ENCODE measurements at regions of chrX and their contacts with region 1.

Region 1: GRCh38 chrX:107627838-107628661 is at the start of gene PRPS1:
- DNase-seq: peak; percentile 62 to 91 (median 86)
- ATAC-seq: peak; percentile 98
- H3K4me3 ChIP-seq: peak within 1 kb of the TSS; percentile 97
- H3K4me3 Mint-ChIP-seq: peak within 1 kb of the TSS; percentile 79 to 97 (median 94)
- H3K27ac ChIP-seq: peak within 1 kb of the TSS; percentile 86
- H3K27ac Mint-ChIP-seq: peak within 1 kb of the TSS; percentile 87 to 97 (median 92)
- H3K4me1 ChIP-seq: peaks cover 11 to 12% of the 10 kb centered on the region in 2 donors
- H3K4me1 Mint-ChIP-seq: peaks cover 2 to 40% (median 32%) of the 10 kb centered on the region in 7 donors
- H3K27me3 ChIP-seq: no peaks in the 10 kb centered on the region
- H3K27me3 Mint-ChIP-seq: no peaks in the 10 kb centered on the region
- total RNA-seq, gene PRPS1: 59.2 to 71.8 (median 62.6) TPM

Region 2: DNA sequence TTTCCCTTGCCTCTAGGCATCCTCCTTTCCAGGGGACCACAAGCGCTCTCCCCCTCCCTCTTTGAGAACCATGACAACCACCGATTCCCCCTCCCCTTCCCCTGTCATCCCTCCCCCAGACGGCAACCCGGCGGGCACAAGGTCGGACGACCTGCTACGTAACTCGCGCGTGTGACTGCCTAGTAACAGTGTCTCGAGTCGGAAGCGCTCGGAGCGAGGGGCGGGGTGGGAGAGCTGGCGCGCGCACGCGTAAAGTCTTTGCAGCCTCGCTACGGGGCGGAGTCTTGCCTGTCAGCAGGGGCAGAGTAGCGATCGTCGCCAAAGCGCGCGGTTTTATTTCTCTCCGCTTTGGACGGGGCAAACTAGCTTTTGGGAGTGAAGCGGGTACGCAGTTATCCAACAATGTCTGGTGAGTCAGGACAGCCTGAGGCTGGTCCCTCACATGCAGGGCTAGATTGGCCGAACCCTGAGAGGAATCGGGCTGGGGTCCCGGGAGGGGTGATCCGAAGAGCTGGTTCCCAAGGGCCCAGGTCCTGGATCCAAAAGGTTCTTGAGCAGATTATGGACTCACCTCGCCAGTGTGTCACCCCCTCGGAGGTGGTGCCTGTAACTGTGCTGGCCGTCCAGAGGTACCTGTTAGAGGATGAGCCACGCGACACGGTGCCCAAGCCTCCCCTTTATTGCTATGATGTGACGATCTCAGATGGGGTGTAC is 1016.2 kb before region 1 on chrX and contains the start of gene RADX:
- CTCF ChIA-PET with region 1: no interaction called
- POLR2A ChIA-PET with region 1: no interaction called
- intact Hi-C with region 1: loop called in 1 of 2 experiments (anchors 5 kb)
- DNase-seq: peak; percentile 65 to 91 (median 87)
- ATAC-seq: peak; percentile 94
- H3K4me3 ChIP-seq: peak within 1 kb of the TSS; percentile 89
- H3K4me3 Mint-ChIP-seq: peak within 1 kb of the TSS; percentile 88 to 96 (median 94)
- H3K27ac ChIP-seq: peak within 1 kb of the TSS; percentile 80
- H3K27ac Mint-ChIP-seq: peak within 1 kb of the TSS; percentile 86 to 97 (median 92)
- H3K4me1 ChIP-seq: peaks cover 0 to 3% of the 10 kb centered on the region in 2 donors
- H3K4me1 Mint-ChIP-seq: peaks cover 11 to 29% (median 24%) of the 10 kb centered on the region in 7 donors
- H3K27me3 ChIP-seq: no peaks in the 10 kb centered on the region
- H3K27me3 Mint-ChIP-seq: peaks cover 0 to 4% (median 0%) of the 10 kb centered on the region in 5 donors
- total RNA-seq, gene RADX: 8.0 to 12.7 (median 12.0) TPM

Region 3: GRCh38 chrX:107205770-107206696 is 422.0 kb before region 1 on chrX and contains the starts of genes DNAAF6 and NUP62CL:
- CTCF ChIA-PET with region 1: no interaction called
- POLR2A ChIA-PET with region 1: no interaction called
- intact Hi-C with region 1: loop called (anchors 1 to 5 kb)
- DNase-seq: peak; percentile 28 to 75 (median 61)
- ATAC-seq: peak; percentile 94
- H3K4me3 ChIP-seq: peak within 1 kb of the TSS; percentile 72
- H3K4me3 Mint-ChIP-seq: peak within 1 kb of the TSS; percentile 80 to 93 (median 90)
- H3K27ac ChIP-seq: peak within 1 kb of the TSS; percentile 57
- H3K27ac Mint-ChIP-seq: peak within 1 kb of the TSS; percentile 28 to 84 (median 74)
- H3K4me1 ChIP-seq: no peaks in the 10 kb centered on the region
- H3K4me1 Mint-ChIP-seq: peaks cover 0 to 11% (median 3%) of the 10 kb centered on the region in 7 donors
- H3K27me3 ChIP-seq: no peaks in the 10 kb centered on the region
- H3K27me3 Mint-ChIP-seq: peaks cover 0 to 2% (median 0%) of the 10 kb centered on the region in 5 donors
- total RNA-seq, gene DNAAF6: not detected
- total RNA-seq, gene NUP62CL: 0.73 to 2.1 (median 1.6) TPM

Region 4: GRCh38 chrX:107654872-107655761 is 27.1 kb after region 1 on chrX:
- CTCF ChIA-PET with region 1: interaction called, 6 read pairs
- POLR2A ChIA-PET with region 1: interaction called, 6 read pairs
- intact Hi-C with region 1: loop called (anchors 2 kb)
- DNase-seq: peak; percentile 49 to 76 (median 60)
- ATAC-seq: peak; percentile 94
- H3K4me3 ChIP-seq: no peak overlapping the region
- H3K4me3 Mint-ChIP-seq: no peak overlapping the region
- H3K27ac ChIP-seq: no peak overlapping the region
- H3K27ac Mint-ChIP-seq: peak overlapping the region in 7 of 9 donors; percentile 1 to 89 (median 72)
- H3K4me1 ChIP-seq: peaks cover 0 to 6% of the 10 kb centered on the region in 2 donors
- H3K4me1 Mint-ChIP-seq: peaks cover 6 to 30% (median 18%) of the 10 kb centered on the region in 7 donors
- H3K27me3 ChIP-seq: no peaks in the 10 kb centered on the region
- H3K27me3 Mint-ChIP-seq: no peaks in the 10 kb centered on the region

Region 5: DNA sequence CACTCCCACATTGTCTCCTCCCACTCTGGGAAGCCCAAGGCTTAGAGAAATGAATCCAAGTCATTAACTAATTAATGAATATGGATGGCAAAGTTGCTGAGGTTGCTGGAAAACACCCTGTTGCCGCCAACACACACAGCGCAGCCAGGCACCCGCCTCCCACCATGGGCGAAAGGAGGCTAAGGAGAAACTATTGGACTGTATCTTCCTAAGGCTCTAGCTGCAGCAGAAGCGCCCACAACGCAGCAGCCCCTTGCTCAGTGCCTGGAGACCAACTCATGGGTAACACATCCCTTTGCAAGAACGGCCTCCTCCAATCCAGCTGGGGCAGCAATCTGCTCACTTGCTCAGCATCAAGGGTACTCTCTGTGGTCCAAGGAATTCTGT is 113.3 kb after region 1 on chrX:
- CTCF ChIA-PET with region 1: no interaction called
- POLR2A ChIA-PET with region 1: interaction called, 8 read pairs
- intact Hi-C with region 1: loop called (anchors 1 kb)
- DNase-seq: peak in 1 of 9 donors; percentile 10
- ATAC-seq: no peak
- H3K4me3 ChIP-seq: peak overlapping the region; percentile 45
- H3K4me3 Mint-ChIP-seq: peak overlapping the region; percentile 80 to 96 (median 85)
- H3K27ac ChIP-seq: peak overlapping the region; percentile 72
- H3K27ac Mint-ChIP-seq: peak overlapping the region; percentile 94 to 100 (median 99)
- H3K4me1 ChIP-seq: peaks cover 26 to 45% of the 10 kb centered on the region in 2 donors
- H3K4me1 Mint-ChIP-seq: peaks cover 15 to 70% (median 45%) of the 10 kb centered on the region in 7 donors
- H3K27me3 ChIP-seq: no peaks in the 10 kb centered on the region
- H3K27me3 Mint-ChIP-seq: peaks cover 0 to 7% (median 0%) of the 10 kb centered on the region in 5 donors

Region 6: GRCh38 chrX:108020631-108021030 is 392.6 kb after region 1 on chrX:
- CTCF ChIA-PET with region 1: no interaction called
- POLR2A ChIA-PET with region 1: interaction called, 3 read pairs
- intact Hi-C with region 1: loop called in 1 of 2 experiments (anchors 5 kb)
- DNase-seq: peak in 7 of 9 donors; percentile 10 to 41 (median 29)
- ATAC-seq: no peak
- H3K4me3 ChIP-seq: peak overlapping the region; percentile 24
- H3K4me3 Mint-ChIP-seq: peak overlapping the region; percentile 73 to 95 (median 88)
- H3K27ac ChIP-seq: peak overlapping the region; percentile 82
- H3K27ac Mint-ChIP-seq: peak overlapping the region in 8 of 9 donors; percentile 88 to 97 (median 96)
- H3K4me1 ChIP-seq: peaks cover 26 to 38% of the 10 kb centered on the region in 2 donors
- H3K4me1 Mint-ChIP-seq: peaks cover 21 to 88% (median 79%) of the 10 kb centered on the region in 7 donors
- H3K27me3 ChIP-seq: no peaks in the 10 kb centered on the region
- H3K27me3 Mint-ChIP-seq: no peaks in the 10 kb centered on the region

Region 7: DNA sequence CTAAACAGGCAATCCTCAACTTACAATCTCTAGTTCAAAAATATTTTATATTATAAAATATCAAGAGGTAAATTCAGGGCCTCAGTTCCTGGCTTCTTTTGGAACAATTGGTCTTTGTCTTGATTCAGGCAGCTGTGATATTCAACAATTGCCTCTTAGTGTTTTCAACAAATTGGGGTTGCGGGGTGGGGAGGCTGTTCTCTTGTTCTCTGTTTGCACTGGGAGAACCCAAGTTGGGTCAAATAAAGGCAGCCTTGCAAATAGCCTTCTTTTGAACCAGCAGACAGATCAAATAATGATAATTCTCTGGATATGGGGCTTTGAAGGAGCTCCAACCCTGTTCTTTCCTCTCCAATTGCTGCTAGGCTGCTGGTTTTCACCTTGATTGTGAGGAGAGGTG is 954.1 kb after region 1 on chrX:
- CTCF ChIA-PET with region 1: no interaction called
- POLR2A ChIA-PET with region 1: no interaction called
- intact Hi-C with region 1: no loop called
- DNase-seq: no peak
- ATAC-seq: no peak
- H3K4me3 ChIP-seq: no peak overlapping the region
- H3K4me3 Mint-ChIP-seq: no peak overlapping the region
- H3K27ac ChIP-seq: no peak overlapping the region
- H3K27ac Mint-ChIP-seq: no peak overlapping the region
- H3K4me1 ChIP-seq: no peaks in the 10 kb centered on the region
- H3K4me1 Mint-ChIP-seq: no peaks in the 10 kb centered on the region
- H3K27me3 ChIP-seq: no peaks in the 10 kb centered on the region
- H3K27me3 Mint-ChIP-seq: no peaks in the 10 kb centered on the region

Measured in naive thymus-derived CD4-positive, alpha-beta T cell (primary cell).